ENCODE measurements at regions of chr18 and their contacts with region 1.

Region 1: GRCh38 chr18:28584731-28585130 is 407.8 kb upstream of the CDH2 start:
- DNase-seq: no peak
- ATAC-seq: no peak
- H3K4me3 ChIP-seq: no peak overlapping the region
- H3K4me3 Mint-ChIP-seq: no peak overlapping the region
- H3K27ac ChIP-seq: no peak overlapping the region
- H3K27ac Mint-ChIP-seq: no peak overlapping the region
- H3K4me1 ChIP-seq: no peaks in the 10 kb centered on the region
- H3K4me1 Mint-ChIP-seq: no peaks in the 10 kb centered on the region
- H3K27me3 ChIP-seq: no peaks in the 10 kb centered on the region
- H3K27me3 Mint-ChIP-seq: no peaks in the 10 kb centered on the region
- CTCF ChIP-seq: no peak

Region 2: DNA sequence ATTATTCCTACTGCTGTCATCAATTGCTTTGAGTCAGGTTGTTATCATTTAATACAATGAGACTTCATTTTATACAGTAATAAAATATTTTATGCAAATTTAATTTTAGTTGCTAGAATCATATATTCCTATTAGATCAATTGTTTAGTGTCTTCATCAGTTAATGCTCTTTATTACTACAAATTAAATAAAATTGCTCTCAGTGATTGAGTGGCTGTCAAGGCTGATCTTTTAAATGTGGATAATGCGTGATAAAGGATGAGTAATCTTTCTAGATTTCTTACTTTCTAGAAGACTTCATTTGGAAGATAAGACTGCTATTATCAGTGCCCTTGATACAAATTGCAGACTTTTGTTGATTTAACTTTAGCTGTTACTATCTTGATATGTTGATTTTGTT is 348.2 kb before region 1 on chr18:
- CTCF ChIA-PET with region 1: no interaction called
- POLR2A ChIA-PET with region 1: no interaction called
- intact Hi-C with region 1: no loop called
- DNase-seq: no peak
- ATAC-seq: no peak
- H3K4me3 ChIP-seq: no peak overlapping the region
- H3K4me3 Mint-ChIP-seq: no peak overlapping the region
- H3K27ac ChIP-seq: no peak overlapping the region
- H3K27ac Mint-ChIP-seq: no peak overlapping the region
- H3K4me1 ChIP-seq: no peaks in the 10 kb centered on the region
- H3K4me1 Mint-ChIP-seq: no peaks in the 10 kb centered on the region
- H3K27me3 ChIP-seq: no peaks in the 10 kb centered on the region
- H3K27me3 Mint-ChIP-seq: no peaks in the 10 kb centered on the region
- CTCF ChIP-seq: no peak

Region 3: GRCh38 chr18:28512357-28512756 is 72.4 kb before region 1 on chr18:
- CTCF ChIA-PET with region 1: no interaction called
- POLR2A ChIA-PET with region 1: no interaction called
- intact Hi-C with region 1: loop called in 1 of 2 experiments (anchors 2 kb)
- DNase-seq: no peak
- ATAC-seq: no peak
- H3K4me3 ChIP-seq: no peak overlapping the region
- H3K4me3 Mint-ChIP-seq: no peak overlapping the region
- H3K27ac ChIP-seq: no peak overlapping the region
- H3K27ac Mint-ChIP-seq: no peak overlapping the region
- H3K4me1 ChIP-seq: no peaks in the 10 kb centered on the region
- H3K4me1 Mint-ChIP-seq: no peaks in the 10 kb centered on the region
- H3K27me3 ChIP-seq: no peaks in the 10 kb centered on the region
- H3K27me3 Mint-ChIP-seq: no peaks in the 10 kb centered on the region
- CTCF ChIP-seq: no peak

Region 4: GRCh38 chr18:28571929-28572328 is 12.8 kb before region 1 on chr18:
- CTCF ChIA-PET with region 1: no interaction called
- POLR2A ChIA-PET with region 1: no interaction called
- intact Hi-C with region 1: no loop called
- DNase-seq: no peak
- ATAC-seq: no peak
- H3K4me3 ChIP-seq: no peak overlapping the region
- H3K4me3 Mint-ChIP-seq: no peak overlapping the region
- H3K27ac ChIP-seq: no peak overlapping the region
- H3K27ac Mint-ChIP-seq: no peak overlapping the region
- H3K4me1 ChIP-seq: no peaks in the 10 kb centered on the region
- H3K4me1 Mint-ChIP-seq: no peaks in the 10 kb centered on the region
- H3K27me3 ChIP-seq: no peaks in the 10 kb centered on the region
- H3K27me3 Mint-ChIP-seq: no peaks in the 10 kb centered on the region
- CTCF ChIP-seq: no peak

Measured in CD4-positive, alpha-beta T cell (primary cell).